CD4-positive, alpha-beta memory T cell (primary cell): ENCODE measurements at regions of chr11 and their contacts with region 1.

Region 1: GRCh38 chr11:3854977-3855807 is at the start of gene STIM1:
- DNase-seq: peak; percentile 96 to 98 (median 97)
- H3K4me3 ChIP-seq: peak within 1 kb of the TSS; percentile 91 to 92
- H3K4me3 Mint-ChIP-seq: peak within 1 kb of the TSS; percentile 90 to 97 (median 94)
- H3K27ac ChIP-seq: peak within 1 kb of the TSS; percentile 94
- H3K27ac Mint-ChIP-seq: peak within 1 kb of the TSS; percentile 99 to 100 (median 99)
- H3K4me1 ChIP-seq: peaks cover 64% of the 10 kb centered on the region
- H3K4me1 Mint-ChIP-seq: peaks cover 49 to 71% (median 61%) of the 10 kb centered on the region in 4 donors
- H3K27me3 ChIP-seq: no peaks in the 10 kb centered on the region
- H3K27me3 Mint-ChIP-seq: no peaks in the 10 kb centered on the region
- total RNA-seq, gene STIM1: 87.1 to 87.4 TPM

Region 2: GRCh38 chr11:3841426-3842350 is 13.5 kb before region 1 on chr11:
- CTCF ChIA-PET with region 1: interaction called, 514 read pairs
- POLR2A ChIA-PET with region 1: interaction called, 659 read pairs
- intact Hi-C with region 1: loop called (anchors 1 kb)
- DNase-seq: peak; percentile 94 to 99 (median 96)
- H3K4me3 ChIP-seq: peak overlapping the region in 1 of 2 donors; percentile 75
- H3K4me3 Mint-ChIP-seq: peak overlapping the region; percentile 86 to 96 (median 88)
- H3K27ac ChIP-seq: peak overlapping the region; percentile 95
- H3K27ac Mint-ChIP-seq: peak overlapping the region; percentile 95 to 99 (median 98)
- H3K4me1 ChIP-seq: peaks cover 34% of the 10 kb centered on the region
- H3K4me1 Mint-ChIP-seq: peaks cover 23 to 57% (median 37%) of the 10 kb centered on the region in 4 donors
- H3K27me3 ChIP-seq: no peaks in the 10 kb centered on the region
- H3K27me3 Mint-ChIP-seq: peaks cover 0 to 3% of the 10 kb centered on the region in 2 donors

Region 3: DNA sequence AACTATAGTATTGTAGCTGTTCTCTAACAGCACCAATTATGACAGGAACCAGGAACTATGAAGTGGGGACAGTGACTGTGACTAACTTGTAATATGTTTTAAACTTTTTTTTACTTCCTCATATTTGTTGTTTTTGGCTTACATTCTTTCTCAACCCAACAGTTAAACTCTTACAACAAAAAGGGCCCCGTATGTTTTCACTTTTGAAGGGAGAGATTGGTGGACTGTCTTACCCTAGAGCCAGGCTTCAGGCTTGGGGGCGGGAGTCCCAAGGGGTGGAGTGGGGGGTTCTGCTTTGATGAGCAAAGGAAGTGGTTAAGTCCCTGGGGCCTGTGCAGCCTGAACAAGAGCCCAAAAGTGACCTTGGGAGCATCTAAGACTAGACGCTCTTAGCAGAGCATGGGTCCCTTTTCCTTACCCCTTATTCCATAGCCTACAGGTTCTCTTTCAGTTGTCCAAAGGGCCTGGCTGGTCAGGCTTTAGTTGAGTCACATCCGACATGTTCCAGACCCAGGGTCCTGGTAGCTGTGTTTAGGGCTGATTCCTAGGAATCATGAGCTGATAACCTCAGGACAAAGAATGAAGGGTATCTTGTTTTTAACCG is 39.0 kb after region 1 on chr11:
- CTCF ChIA-PET with region 1: interaction called, 11 read pairs
- POLR2A ChIA-PET with region 1: interaction called, 14 read pairs
- intact Hi-C with region 1: no loop called
- DNase-seq: no peak
- H3K4me3 ChIP-seq: no peak overlapping the region
- H3K4me3 Mint-ChIP-seq: peak overlapping the region in 5 of 8 donors; percentile 11 to 58 (median 15)
- H3K27ac ChIP-seq: no peak overlapping the region
- H3K27ac Mint-ChIP-seq: peak overlapping the region; percentile 3 to 75 (median 44)
- H3K4me1 ChIP-seq: peaks cover 39% of the 10 kb centered on the region
- H3K4me1 Mint-ChIP-seq: peaks cover 35 to 61% (median 47%) of the 10 kb centered on the region in 4 donors
- H3K27me3 ChIP-seq: no peaks in the 10 kb centered on the region
- H3K27me3 Mint-ChIP-seq: no peaks in the 10 kb centered on the region

Region 4: GRCh38 chr11:3939211-3939610 is 84.0 kb after region 1 on chr11:
- CTCF ChIA-PET with region 1: interaction called, 48 read pairs
- POLR2A ChIA-PET with region 1: interaction called, 229 read pairs
- intact Hi-C with region 1: no loop called
- DNase-seq: no peak
- H3K4me3 ChIP-seq: no peak overlapping the region
- H3K4me3 Mint-ChIP-seq: no peak overlapping the region
- H3K27ac ChIP-seq: no peak overlapping the region
- H3K27ac Mint-ChIP-seq: peak overlapping the region; percentile 9 to 82 (median 77)
- H3K4me1 ChIP-seq: peaks cover 70% of the 10 kb centered on the region
- H3K4me1 Mint-ChIP-seq: peaks cover 63 to 85% (median 75%) of the 10 kb centered on the region in 4 donors
- H3K27me3 ChIP-seq: no peaks in the 10 kb centered on the region
- H3K27me3 Mint-ChIP-seq: no peaks in the 10 kb centered on the region

Region 5: DNA sequence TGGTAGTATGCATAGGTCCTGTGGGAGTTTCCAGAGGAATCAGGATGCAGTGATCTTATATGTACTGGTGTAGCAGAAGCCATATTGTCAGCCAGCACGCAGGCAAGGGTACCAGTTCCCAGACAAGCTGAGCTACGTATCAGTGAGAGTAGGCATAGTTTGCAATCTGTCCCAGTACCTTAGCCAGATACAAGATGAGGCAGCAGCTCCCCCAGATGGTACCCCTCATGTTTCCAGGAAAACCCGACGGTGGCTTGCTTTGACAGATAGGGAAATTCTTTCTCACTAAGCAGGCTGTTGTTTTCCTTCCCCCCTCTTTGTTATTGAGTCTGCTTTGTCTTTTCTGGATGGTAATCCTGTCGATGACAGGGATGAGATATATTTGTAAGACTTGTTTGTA is 129.7 kb after region 1 on chr11:
- CTCF ChIA-PET with region 1: interaction called, 27 read pairs
- POLR2A ChIA-PET with region 1: interaction called, 14 read pairs
- intact Hi-C with region 1: loop called (anchors 1 kb)
- DNase-seq: peak in 2 of 5 donors; percentile 9 to 17
- H3K4me3 ChIP-seq: no peak overlapping the region
- H3K4me3 Mint-ChIP-seq: peak overlapping the region in 1 of 8 donors; percentile 66
- H3K27ac ChIP-seq: no peak overlapping the region
- H3K27ac Mint-ChIP-seq: peak overlapping the region in 5 of 7 donors; percentile 1 to 95 (median 83)
- H3K4me1 ChIP-seq: peaks cover 68% of the 10 kb centered on the region
- H3K4me1 Mint-ChIP-seq: peaks cover 61 to 91% (median 78%) of the 10 kb centered on the region in 4 donors
- H3K27me3 ChIP-seq: no peaks in the 10 kb centered on the region
- H3K27me3 Mint-ChIP-seq: no peaks in the 10 kb centered on the region

Region 6: GRCh38 chr11:4072668-4073285 is 217.6 kb after region 1 on chr11:
- CTCF ChIA-PET with region 1: interaction called, 934 read pairs
- POLR2A ChIA-PET with region 1: interaction called, 89 read pairs
- intact Hi-C with region 1: loop called (anchors 1 kb)
- DNase-seq: peak; percentile 64 to 77 (median 76)
- H3K4me3 ChIP-seq: no peak overlapping the region
- H3K4me3 Mint-ChIP-seq: no peak overlapping the region
- H3K27ac ChIP-seq: peak overlapping the region; percentile 17
- H3K27ac Mint-ChIP-seq: peak overlapping the region; percentile 33 to 92 (median 88)
- H3K4me1 ChIP-seq: peaks cover 39% of the 10 kb centered on the region
- H3K4me1 Mint-ChIP-seq: peaks cover 40 to 63% (median 49%) of the 10 kb centered on the region in 4 donors
- H3K27me3 ChIP-seq: no peaks in the 10 kb centered on the region
- H3K27me3 Mint-ChIP-seq: no peaks in the 10 kb centered on the region